Naive thymus-derived CD8-positive, alpha-beta T cell (primary cell): ENCODE measurements at regions of chr1 and their contacts with region 1.

Region 1: GRCh38 chr1:89566761-89567174 is 42.1 kb downstream of the LRRC8B start:
- DNase-seq: no peak
- ATAC-seq: no peak
- H3K4me3 Mint-ChIP-seq: no peak overlapping the region
- H3K27ac Mint-ChIP-seq: peak overlapping the region in 1 of 10 donors; percentile 44
- H3K4me1 Mint-ChIP-seq: peaks cover 15 to 40% (median 29%) of the 10 kb centered on the region in 4 donors
- H3K27me3 Mint-ChIP-seq: no peaks in the 10 kb centered on the region

Region 2: GRCh38 chr1:89476072-89476471 is 90.7 kb before region 1 on chr1:
- POLR2A ChIA-PET with region 1: no interaction called
- DNase-seq: no peak
- ATAC-seq: no peak
- H3K4me3 Mint-ChIP-seq: no peak overlapping the region
- H3K27ac Mint-ChIP-seq: no peak overlapping the region
- H3K4me1 Mint-ChIP-seq: peaks cover 3 to 8% (median 6%) of the 10 kb centered on the region in 4 donors
- H3K27me3 Mint-ChIP-seq: peaks cover 0 to 4% (median 0%) of the 10 kb centered on the region in 5 donors

Region 3: GRCh38 chr1:89512996-89513720 is 53.6 kb before region 1 on chr1:
- POLR2A ChIA-PET with region 1: interaction called, 10 read pairs
- DNase-seq: no peak
- ATAC-seq: no peak
- H3K4me3 Mint-ChIP-seq: no peak overlapping the region
- H3K27ac Mint-ChIP-seq: no peak overlapping the region
- H3K4me1 Mint-ChIP-seq: no peaks in the 10 kb centered on the region
- H3K27me3 Mint-ChIP-seq: peaks cover 0 to 3% (median 0%) of the 10 kb centered on the region in 5 donors

Region 4: GRCh38 chr1:89779151-89779940 is 212.6 kb after region 1 on chr1:
- POLR2A ChIA-PET with region 1: no interaction called
- DNase-seq: no peak
- ATAC-seq: no peak
- H3K4me3 Mint-ChIP-seq: no peak overlapping the region
- H3K27ac Mint-ChIP-seq: no peak overlapping the region
- H3K4me1 Mint-ChIP-seq: peaks cover 20 to 38% (median 34%) of the 10 kb centered on the region in 4 donors
- H3K27me3 Mint-ChIP-seq: peaks cover 0 to 8% (median 0%) of the 10 kb centered on the region in 5 donors